H1 (cell line): ENCODE measurements at regions of chr2 and their contacts with region 1.

Region 1: GRCh38 chr2:113138428-113139322 is 11.3 kb downstream of the IL1RN start:
- DNase-seq: peak in 1 of 2 experiments; percentile 48
- H3K4me3 ChIP-seq: no peak overlapping the region
- H3K27ac ChIP-seq: no peak overlapping the region
- H3K4me1 ChIP-seq: no peaks in the 10 kb centered on the region
- H3K27me3 ChIP-seq: no peaks in the 10 kb centered on the region
- CTCF ChIP-seq: peak in 2 of 3 experiments; percentile 62 to 73; a peak in 3 of 4 replicates
- EP300 ChIP-seq: no peak
- POLR2A ChIP-seq: no peak
- RAD21 ChIP-seq: peak; percentile 49 to 64

Region 2: DNA sequence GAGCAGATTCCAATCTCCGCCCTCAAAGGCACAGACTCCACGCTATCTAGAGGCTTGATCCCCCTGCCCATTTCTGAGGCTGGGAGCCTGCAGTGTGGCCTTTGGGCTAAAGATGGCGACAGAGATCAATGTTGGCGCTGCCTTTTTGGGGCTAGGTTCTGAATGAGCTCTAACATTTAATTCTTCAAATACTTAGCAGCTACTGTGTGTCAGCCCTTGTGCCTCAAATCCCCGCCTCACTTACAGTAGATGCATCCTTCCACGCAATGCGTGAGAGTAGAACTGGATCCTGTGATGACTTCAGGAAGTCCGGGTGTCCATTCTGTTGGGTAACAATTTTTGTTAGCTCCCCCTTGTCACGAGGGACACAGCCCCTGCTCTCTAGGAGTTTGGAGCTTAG is 58.5 kb before region 1 on chr2:
- CTCF ChIA-PET with region 1: interaction called, 24 read pairs
- POLR2A ChIA-PET with region 1: no interaction called
- DNase-seq: peak; percentile 23 to 89
- H3K4me3 ChIP-seq: no peak overlapping the region
- H3K27ac ChIP-seq: no peak overlapping the region
- H3K4me1 ChIP-seq: peaks cover 0 to 2% (median 0%) of the 10 kb centered on the region in 4 experiments; a peak in 1 of 7 replicates
- H3K27me3 ChIP-seq: no peaks in the 10 kb centered on the region; a peak in 1 of 7 replicates
- CTCF ChIP-seq: peak; percentile 86 to 88 (median 87)
- EP300 ChIP-seq: no peak
- POLR2A ChIP-seq: no peak
- RAD21 ChIP-seq: peak; percentile 81 to 85

Region 3: DNA sequence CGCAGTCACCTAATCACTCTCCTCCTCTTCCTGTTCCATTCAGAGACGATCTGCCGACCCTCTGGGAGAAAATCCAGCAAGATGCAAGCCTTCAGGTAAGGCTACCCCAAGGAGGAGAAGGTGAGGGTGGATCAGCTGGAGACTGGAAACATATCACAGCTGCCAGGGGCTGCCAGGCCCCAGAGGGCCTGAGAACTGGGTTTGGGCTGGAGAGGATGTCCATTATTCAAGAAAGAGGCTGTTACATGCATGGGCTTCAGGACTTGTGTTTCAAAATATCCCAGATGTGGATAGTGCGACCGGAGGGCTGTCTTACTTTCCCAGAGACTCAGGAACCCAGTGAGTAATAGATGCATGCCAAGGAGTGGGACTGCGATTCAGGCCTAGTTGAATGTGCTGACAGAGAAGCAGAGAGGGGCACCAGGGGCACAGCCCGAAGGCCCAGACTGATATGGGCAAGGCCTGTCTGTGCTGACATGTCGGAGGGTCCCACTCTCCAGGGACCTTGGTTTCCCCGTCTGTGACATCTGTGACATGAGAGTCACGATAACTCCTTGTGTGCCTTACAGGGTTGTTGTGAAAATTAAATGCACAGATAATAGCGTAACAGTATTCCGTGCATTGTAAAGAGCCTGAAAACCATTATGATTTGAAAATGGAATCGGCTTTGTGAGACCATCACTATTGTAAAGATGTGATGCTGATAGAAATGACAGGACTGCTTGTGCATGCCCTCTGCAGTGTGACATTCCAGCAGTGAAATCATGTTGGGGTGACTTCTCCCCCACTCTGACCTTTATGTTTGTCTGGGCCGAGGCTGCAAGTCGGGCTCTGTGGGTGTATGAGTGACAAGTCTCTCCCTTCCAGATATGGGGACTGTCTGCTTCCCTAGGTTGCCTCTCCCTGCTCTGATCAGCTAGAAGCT is 10.8 kb before region 1 on chr2:
- CTCF ChIA-PET with region 1: interaction called, 71 read pairs
- POLR2A ChIA-PET with region 1: no interaction called
- DNase-seq: no peak
- H3K4me3 ChIP-seq: no peak overlapping the region
- H3K27ac ChIP-seq: no peak overlapping the region
- H3K4me1 ChIP-seq: no peaks in the 10 kb centered on the region
- H3K27me3 ChIP-seq: no peaks in the 10 kb centered on the region
- CTCF ChIP-seq: no peak
- EP300 ChIP-seq: no peak
- POLR2A ChIP-seq: no peak
- RAD21 ChIP-seq: no peak

Region 4: GRCh38 chr2:113157118-113157896 is 18.6 kb after region 1 on chr2:
- CTCF ChIA-PET with region 1: interaction called, 85 read pairs
- POLR2A ChIA-PET with region 1: no interaction called
- DNase-seq: peak in 1 of 2 experiments; percentile 64
- H3K4me3 ChIP-seq: peak overlapping the region; percentile 41 to 66 (median 58)
- H3K27ac ChIP-seq: no peak overlapping the region
- H3K4me1 ChIP-seq: peaks cover 1 to 10% (median 2%) of the 10 kb centered on the region in 4 experiments; a peak in 4 of 7 replicates
- H3K27me3 ChIP-seq: peaks cover 2 to 14% (median 10%) of the 10 kb centered on the region in 4 experiments
- CTCF ChIP-seq: no peak; a peak in 1 of 4 replicates
- EP300 ChIP-seq: no peak
- POLR2A ChIP-seq: no peak
- RAD21 ChIP-seq: no peak

Region 5: GRCh38 chr2:113173542-113174395 is 35.1 kb after region 1 on chr2 and contains the start of gene PSD4:
- CTCF ChIA-PET with region 1: interaction called, 63 read pairs
- POLR2A ChIA-PET with region 1: no interaction called
- DNase-seq: no peak
- H3K4me3 ChIP-seq: no peak within 1 kb of the TSS
- H3K27ac ChIP-seq: no peak within 1 kb of the TSS
- H3K4me1 ChIP-seq: peaks cover 0 to 3% (median 0%) of the 10 kb centered on the region in 4 experiments; a peak in 3 of 7 replicates
- H3K27me3 ChIP-seq: no peaks in the 10 kb centered on the region
- CTCF ChIP-seq: no peak
- EP300 ChIP-seq: no peak
- POLR2A ChIP-seq: no peak
- RAD21 ChIP-seq: no peak
- total RNA-seq, gene PSD4: 1.2 and 1.3 TPM in 2 replicates

Region 6: DNA sequence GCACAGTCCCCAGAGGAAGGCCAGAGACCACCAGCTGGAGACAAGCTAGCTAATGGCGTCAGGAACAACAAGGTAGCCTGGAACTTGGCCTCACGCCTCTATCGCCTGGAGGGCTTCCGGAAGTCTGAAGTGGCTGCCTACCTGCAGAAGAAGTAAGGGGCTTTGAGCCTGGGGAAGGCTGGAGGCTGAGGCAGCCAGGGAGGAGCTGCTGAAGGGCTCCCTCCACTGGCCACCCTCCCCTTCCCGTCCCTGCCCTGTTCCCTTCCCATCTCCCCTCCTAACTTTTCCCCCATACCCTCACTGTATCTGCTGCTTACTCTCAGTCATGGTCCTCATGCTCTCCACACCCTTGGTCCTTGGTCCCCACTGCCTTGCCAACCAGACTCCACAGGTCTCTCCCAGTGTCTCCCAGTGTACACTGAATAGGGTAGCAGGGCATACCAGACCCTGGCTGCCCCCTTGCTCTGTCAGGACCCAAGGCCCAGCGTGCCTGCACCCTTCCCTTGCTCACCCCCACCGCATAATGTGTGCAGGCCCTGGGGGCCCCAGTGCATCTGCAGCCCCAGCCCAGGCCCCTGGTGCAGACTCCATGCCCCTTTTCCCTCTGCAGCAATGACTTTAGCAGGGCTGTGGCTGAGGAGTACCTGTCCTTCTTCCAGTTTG is 53.9 kb after region 1 on chr2:
- CTCF ChIA-PET with region 1: interaction called, 253 read pairs
- POLR2A ChIA-PET with region 1: interaction called, 4 read pairs
- DNase-seq: no peak
- H3K4me3 ChIP-seq: no peak overlapping the region
- H3K27ac ChIP-seq: no peak overlapping the region
- H3K4me1 ChIP-seq: no peaks in the 10 kb centered on the region
- H3K27me3 ChIP-seq: no peaks in the 10 kb centered on the region
- CTCF ChIP-seq: peak; percentile 64 to 70 (median 69)
- EP300 ChIP-seq: no peak
- POLR2A ChIP-seq: no peak
- RAD21 ChIP-seq: peak; percentile 66 to 71

Region 7: DNA sequence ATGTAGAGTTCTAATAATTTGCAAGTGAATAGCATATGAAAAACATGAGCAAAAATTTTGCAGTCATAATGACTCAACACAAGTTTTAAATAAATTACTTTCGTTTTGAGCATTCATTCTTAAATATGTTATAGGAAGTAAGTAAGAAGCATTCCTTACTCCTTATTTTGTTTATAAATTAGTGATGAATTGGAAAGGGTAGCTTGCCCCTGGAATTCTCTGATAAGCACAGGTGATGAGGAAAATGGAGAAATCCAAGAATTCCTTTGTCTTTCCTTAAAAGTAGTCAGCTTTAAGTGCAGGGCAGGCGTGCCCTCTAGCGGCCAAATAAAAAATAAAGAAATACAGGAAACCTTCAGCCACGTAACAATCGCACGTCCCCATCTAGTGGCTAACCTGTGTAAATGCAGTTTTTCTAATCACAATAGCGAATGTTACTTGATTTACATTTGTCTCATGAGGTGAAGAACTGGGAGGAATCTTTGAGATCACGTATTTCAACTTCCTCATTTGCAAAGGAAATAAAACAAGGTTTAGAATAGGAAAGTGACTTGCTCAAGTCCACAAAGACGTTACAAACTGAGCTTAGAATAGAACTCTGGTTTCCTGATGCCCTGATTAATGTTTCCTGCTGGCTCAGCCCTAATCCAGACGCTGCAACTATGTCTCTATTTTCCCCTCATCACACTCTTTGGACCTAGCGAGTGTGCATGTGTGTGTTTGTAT is 251.6 kb after region 1 on chr2:
- CTCF ChIA-PET with region 1: interaction called, 32 read pairs
- POLR2A ChIA-PET with region 1: no interaction called
- DNase-seq: peak in 1 of 2 experiments; percentile 62
- H3K4me3 ChIP-seq: no peak overlapping the region
- H3K27ac ChIP-seq: no peak overlapping the region
- H3K4me1 ChIP-seq: no peaks in the 10 kb centered on the region
- H3K27me3 ChIP-seq: no peaks in the 10 kb centered on the region
- CTCF ChIP-seq: peak in 2 of 3 experiments; percentile 84 to 99; a peak in 3 of 4 replicates
- EP300 ChIP-seq: no peak
- POLR2A ChIP-seq: no peak
- RAD21 ChIP-seq: peak; percentile 84 to 85